Gastrocnemius medialis (tissue), 4 donors: ENCODE measurements at regions of chr2 and their contacts with region 1.

Region 1: GRCh38 chr2:10072656-10073480 is 7.3 kb downstream of the CYS1 start:
- DNase-seq: peak; percentile 63 to 74
- ATAC-seq: peak; percentile 93 to 98
- H3K4me3 ChIP-seq: no peak overlapping the region
- H3K27ac ChIP-seq: no peak overlapping the region
- H3K4me1 ChIP-seq: peaks cover 0 to 5% of the 10 kb centered on the region in 2 donors
- H3K27me3 ChIP-seq: peaks cover 15 to 17% (median 16%) of the 10 kb centered on the region in 3 donors
- CTCF ChIP-seq: peak; percentile 67 to 91 (median 82)
- POLR2A ChIP-seq: no peak

Region 2: GRCh38 chr2:9843229-9844035 is 229.4 kb before region 1 on chr2 and contains the start of gene TAF1B:
- in situ Hi-C with region 1: loop called in 1 of 4 experiments (anchors 25 kb)
- intact Hi-C with region 1: no loop called
- DNase-seq: peak; percentile 61 to 81
- ATAC-seq: peak; percentile 93 to 94
- H3K4me3 ChIP-seq: peak within 1 kb of the TSS; percentile 74 to 97 (median 90)
- H3K27ac ChIP-seq: peak within 1 kb of the TSS; percentile 80 to 95 (median 88)
- H3K4me1 ChIP-seq: peaks cover 17 to 22% of the 10 kb centered on the region in 2 donors
- H3K27me3 ChIP-seq: no peaks in the 10 kb centered on the region
- CTCF ChIP-seq: peak in 1 of 5 experiments; percentile 25
- POLR2A ChIP-seq: peak; percentile 66 to 75
- total RNA-seq, gene TAF1B: 5.0 to 8.4 (median 7.3) TPM

Region 3: DNA sequence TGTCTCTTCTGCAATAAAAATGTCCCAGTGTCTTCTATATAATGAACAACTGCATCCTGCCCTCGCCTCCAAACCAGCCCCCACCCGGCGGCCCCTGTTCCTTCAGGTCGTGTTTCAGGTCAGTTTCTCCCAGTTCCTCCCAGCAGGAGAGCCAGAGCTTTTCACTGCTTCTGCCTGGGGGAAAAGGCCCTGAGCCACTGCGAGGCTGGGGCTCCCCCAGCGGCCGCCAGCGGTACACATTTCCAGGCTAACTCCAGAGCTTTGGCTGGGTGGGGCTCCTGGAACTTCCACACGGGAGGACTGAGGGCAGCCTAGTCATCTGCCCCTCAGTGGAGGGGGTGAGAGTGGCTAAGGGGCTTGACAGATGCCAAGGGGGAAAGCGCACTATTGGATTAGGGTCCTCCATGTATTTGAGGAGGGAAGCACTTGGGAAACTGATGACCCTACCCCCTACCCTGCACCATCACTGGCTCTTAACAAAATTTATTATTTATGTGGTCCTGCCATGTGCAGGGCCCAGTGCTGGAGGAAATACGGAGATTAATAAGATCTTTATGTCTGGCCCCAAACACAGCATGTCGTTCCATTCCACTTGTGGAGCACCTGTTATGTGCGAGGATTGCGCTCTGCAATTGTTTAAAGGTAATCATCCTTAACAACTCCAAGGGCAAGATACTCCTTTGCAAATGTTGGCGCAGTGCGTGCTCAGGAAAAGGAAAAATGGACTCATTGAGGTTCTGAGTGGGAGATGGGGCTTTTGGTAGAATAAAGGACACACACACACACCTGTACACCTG is 24.7 kb after region 1 on chr2:
- in situ Hi-C with region 1: no loop called
- intact Hi-C with region 1: loop called (anchors 1 kb)
- DNase-seq: peak; percentile 30 to 39
- ATAC-seq: peak; percentile 66 to 80
- H3K4me3 ChIP-seq: no peak overlapping the region
- H3K27ac ChIP-seq: no peak overlapping the region
- H3K4me1 ChIP-seq: peaks cover 0 to 6% of the 10 kb centered on the region in 2 donors
- H3K27me3 ChIP-seq: no peaks in the 10 kb centered on the region
- CTCF ChIP-seq: peak; percentile 66 to 91 (median 79)
- POLR2A ChIP-seq: no peak

Region 4: GRCh38 chr2:10220902-10221391 is 148.1 kb after region 1 on chr2:
- in situ Hi-C with region 1: no loop called
- intact Hi-C with region 1: no loop called
- DNase-seq: no peak
- ATAC-seq: no peak
- H3K4me3 ChIP-seq: no peak overlapping the region
- H3K27ac ChIP-seq: no peak overlapping the region
- H3K4me1 ChIP-seq: no peaks in the 10 kb centered on the region
- H3K27me3 ChIP-seq: peaks cover 0 to 4% (median 0%) of the 10 kb centered on the region in 3 donors
- CTCF ChIP-seq: no peak
- POLR2A ChIP-seq: no peak

Region 5: GRCh38 chr2:10434886-10435819 is 362.3 kb after region 1 on chr2:
- in situ Hi-C with region 1: loop called in 1 of 4 experiments (anchors 5 kb)
- intact Hi-C with region 1: loop called (anchors 2 kb)
- DNase-seq: peak; percentile 29 to 50
- ATAC-seq: peak; percentile 49 to 65
- H3K4me3 ChIP-seq: no peak overlapping the region
- H3K27ac ChIP-seq: no peak overlapping the region
- H3K4me1 ChIP-seq: peaks cover 9 to 13% of the 10 kb centered on the region in 2 donors
- H3K27me3 ChIP-seq: peaks cover 0 to 13% (median 0%) of the 10 kb centered on the region in 3 donors
- CTCF ChIP-seq: peak; percentile 80 to 98 (median 93)
- POLR2A ChIP-seq: no peak